Posterior vena cava (tissue), 2 donors: ENCODE measurements at regions of chr17 and their contacts with region 1.

Region 1: GRCh38 chr17:82917691-82918345 is 78.0 kb upstream of the ZNF750 start:
- DNase-seq: no peak

Region 2: DNA sequence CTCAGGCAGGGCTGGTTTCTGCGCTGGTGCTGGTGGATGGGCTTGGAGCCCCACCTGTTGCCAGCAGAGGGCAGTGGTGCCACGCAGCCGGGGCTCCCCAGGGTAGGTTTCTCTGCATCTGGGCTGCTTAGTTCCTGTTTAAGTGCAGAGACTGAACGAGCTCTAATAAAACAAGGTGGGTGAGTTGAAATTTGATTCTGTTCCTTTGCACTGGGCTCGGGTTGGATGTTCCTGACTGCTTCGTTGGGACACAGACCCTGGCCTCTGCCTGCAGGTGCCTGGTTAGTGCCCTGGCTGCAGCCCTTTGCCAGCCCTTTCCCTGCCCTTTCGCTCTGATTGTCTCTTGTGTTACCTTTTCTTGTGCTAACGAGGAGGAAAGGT is 135.9 kb before region 1 on chr17:
- intact Hi-C with region 1: loop called in 1 of 2 experiments (anchors 5 kb)
- DNase-seq: peak; percentile 95

Region 3: GRCh38 chr17:82804442-82805191 is 113.2 kb before region 1 on chr17:
- intact Hi-C with region 1: loop called in 1 of 2 experiments (anchors 10 kb)
- DNase-seq: peak; percentile 95

Region 4: DNA sequence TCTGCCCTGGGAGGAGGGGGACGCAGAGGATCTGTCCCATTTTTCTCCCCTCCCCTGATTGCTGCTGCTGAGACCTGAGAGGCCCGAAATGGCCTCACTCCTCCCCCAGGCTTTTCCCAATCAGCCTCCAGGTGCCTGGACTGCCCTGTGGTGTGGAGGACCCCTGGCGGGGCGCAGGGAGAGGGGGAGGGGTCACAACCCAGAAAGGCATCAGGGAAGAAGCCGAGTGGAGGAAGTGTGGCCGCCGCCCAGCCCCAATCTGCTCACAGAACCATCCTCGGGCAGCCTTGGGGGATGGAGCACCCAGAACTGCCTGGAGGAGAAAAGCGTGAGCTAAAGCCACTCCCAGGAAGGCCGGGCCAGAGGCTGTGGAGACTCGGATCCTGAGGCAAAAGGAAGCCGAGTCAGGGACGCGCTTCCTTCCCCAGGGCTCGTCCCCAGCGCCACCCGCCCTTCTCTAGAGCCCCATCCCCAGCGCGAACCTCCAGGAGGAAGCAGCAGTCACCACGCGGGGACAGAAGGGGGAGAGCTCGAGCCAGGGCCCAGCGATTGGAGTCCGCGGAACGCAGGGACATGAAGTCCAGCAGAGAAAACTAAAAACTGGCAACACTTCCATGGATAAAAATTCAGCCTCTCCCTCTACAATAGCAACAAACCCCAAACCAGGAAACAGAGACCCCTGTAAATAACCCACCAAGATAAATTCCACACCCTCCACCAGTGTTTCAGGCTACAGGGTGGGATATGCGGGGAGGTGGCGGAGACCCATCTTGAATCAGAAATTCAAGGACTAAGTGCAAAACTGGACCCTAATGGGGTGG is 45.3 kb after region 1 on chr17:
- intact Hi-C with region 1: no loop called
- DNase-seq: peak; percentile 96